GM12878 (cell line): ENCODE measurements at regions of chr1 and their contacts with region 1.

Region 1: GRCh38 chr1:185338719-185339622 is 21.9 kb upstream of the IVNS1ABP start:
- DNase-seq: peak; percentile 86
- ATAC-seq: peak; percentile 97
- H3K4me3 ChIP-seq: no peak overlapping the region
- H3K27ac ChIP-seq: peak overlapping the region; percentile 59
- H3K4me1 ChIP-seq: peaks cover 21% of the 10 kb centered on the region
- H3K27me3 ChIP-seq: no peaks in the 10 kb centered on the region
- CTCF ChIP-seq: no peak
- EP300 ChIP-seq: peak; percentile 93 to 97
- POLR2A ChIP-seq: no peak
- RAD21 ChIP-seq: no peak

Region 2: DNA sequence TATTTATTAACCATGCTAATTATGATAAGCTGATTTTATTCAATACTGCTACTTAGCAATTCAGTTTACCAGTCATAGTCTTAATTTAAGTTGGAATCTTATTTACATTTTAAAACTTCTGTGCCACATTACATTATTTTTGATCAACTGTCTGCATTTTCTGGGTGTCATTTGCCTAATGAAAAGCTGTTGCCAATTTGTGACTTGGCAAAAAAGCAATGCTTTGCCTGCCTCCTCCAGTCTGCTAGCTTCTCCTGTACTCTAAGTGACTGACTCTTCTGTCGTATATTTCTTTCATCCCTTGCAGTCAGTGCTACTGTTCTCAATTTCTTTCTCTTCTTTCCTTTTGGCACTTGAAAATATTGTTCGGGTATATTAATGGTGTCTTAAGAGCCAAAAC is 16.3 kb before region 1 on chr1:
- CTCF ChIA-PET with region 1: interaction called, 29 read pairs
- POLR2A ChIA-PET with region 1: interaction called, 15 read pairs
- RAD21 ChIA-PET with region 1: interaction called, 36 read pairs
- SMC1A ChIA-PET with region 1: interaction called, 54 read pairs
- in situ Hi-C with region 1: no loop called
- intact Hi-C with region 1: loop called (anchors 1 kb)
- DNase-seq: no peak
- ATAC-seq: no peak
- H3K4me3 ChIP-seq: no peak overlapping the region
- H3K27ac ChIP-seq: no peak overlapping the region
- H3K4me1 ChIP-seq: no peaks in the 10 kb centered on the region; the same call in 1 of the 2 replicates
- H3K27me3 ChIP-seq: no peaks in the 10 kb centered on the region
- CTCF ChIP-seq: no peak
- EP300 ChIP-seq: no peak
- POLR2A ChIP-seq: no peak
- RAD21 ChIP-seq: no peak

Region 3: DNA sequence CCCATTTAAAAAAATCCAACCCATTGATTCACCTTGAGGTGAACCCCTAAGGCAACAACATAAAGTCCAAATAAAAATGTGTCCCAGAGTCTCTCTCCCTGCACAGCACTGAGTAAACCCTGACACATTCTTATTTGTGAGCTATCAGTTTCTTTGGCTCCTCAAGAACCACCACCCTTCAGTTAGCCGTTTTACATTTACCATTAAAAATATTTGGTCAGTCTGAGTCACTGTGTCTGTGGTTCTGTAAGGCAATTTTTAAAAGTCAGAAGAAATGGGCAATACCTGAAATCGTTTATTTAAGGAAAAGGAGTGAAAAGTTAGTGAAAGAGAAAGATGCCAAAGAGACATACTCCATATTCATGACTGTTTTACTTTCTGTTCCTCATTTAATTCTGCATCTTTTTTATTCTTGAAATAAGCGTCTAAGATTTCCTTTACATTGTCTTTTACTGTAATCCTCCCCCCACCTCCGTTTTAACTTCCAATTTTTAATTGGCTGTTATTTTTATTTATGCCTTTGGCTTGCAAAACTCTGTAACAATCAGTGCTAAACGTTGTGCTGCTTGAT is 69.8 kb after region 1 on chr1:
- CTCF ChIA-PET with region 1: no interaction called
- POLR2A ChIA-PET with region 1: interaction called, 3 read pairs
- RAD21 ChIA-PET with region 1: interaction called, 4 read pairs
- SMC1A ChIA-PET with region 1: interaction called, 5 read pairs
- in situ Hi-C with region 1: no loop called
- intact Hi-C with region 1: loop called (anchors 2 kb)
- DNase-seq: no peak
- ATAC-seq: peak; percentile 51
- H3K4me3 ChIP-seq: no peak overlapping the region
- H3K27ac ChIP-seq: no peak overlapping the region
- H3K4me1 ChIP-seq: no peaks in the 10 kb centered on the region
- H3K27me3 ChIP-seq: no peaks in the 10 kb centered on the region
- CTCF ChIP-seq: no peak
- EP300 ChIP-seq: no peak
- POLR2A ChIP-seq: no peak
- RAD21 ChIP-seq: no peak

Region 4: GRCh38 chr1:185526344-185527307 is 187.7 kb after region 1 on chr1:
- CTCF ChIA-PET with region 1: no interaction called
- POLR2A ChIA-PET with region 1: no interaction called
- RAD21 ChIA-PET with region 1: no interaction called
- SMC1A ChIA-PET with region 1: no interaction called
- in situ Hi-C with region 1: no loop called
- intact Hi-C with region 1: no loop called
- DNase-seq: peak; percentile 27
- ATAC-seq: peak; percentile 95
- H3K4me3 ChIP-seq: no peak overlapping the region
- H3K27ac ChIP-seq: no peak overlapping the region
- H3K4me1 ChIP-seq: 0 out of 2 replicates have a peak, but pooled peaks cover 8% of the 10 kb centered on the region
- H3K27me3 ChIP-seq: no peaks in the 10 kb centered on the region
- CTCF ChIP-seq: no peak
- EP300 ChIP-seq: no peak
- POLR2A ChIP-seq: no peak
- RAD21 ChIP-seq: no peak

Region 5: DNA sequence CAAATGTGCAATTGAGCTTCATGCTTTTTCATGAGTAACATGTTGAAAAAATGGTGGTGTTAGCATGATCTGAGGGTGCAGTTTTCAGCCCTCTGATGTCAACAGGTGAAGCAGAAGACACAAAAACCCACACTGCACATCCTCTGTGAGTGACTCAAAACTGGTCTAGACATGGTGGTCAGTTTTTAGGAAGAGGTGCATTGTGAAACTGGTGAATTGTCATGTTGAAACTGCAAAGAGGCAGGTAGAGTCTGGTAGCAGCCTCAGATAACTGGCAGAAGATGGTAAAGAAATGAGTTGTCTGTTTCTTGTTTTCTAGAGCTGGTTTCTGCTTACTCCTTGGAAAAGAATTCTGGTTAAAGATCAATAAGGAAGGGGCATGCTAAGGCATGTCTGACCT is 297.9 kb after region 1 on chr1:
- CTCF ChIA-PET with region 1: no interaction called
- POLR2A ChIA-PET with region 1: no interaction called
- RAD21 ChIA-PET with region 1: no interaction called
- SMC1A ChIA-PET with region 1: no interaction called
- in situ Hi-C with region 1: no loop called
- intact Hi-C with region 1: loop called (anchors 2 kb)
- DNase-seq: peak; percentile 91
- ATAC-seq: peak; percentile 99
- H3K4me3 ChIP-seq: no peak overlapping the region
- H3K27ac ChIP-seq: no peak overlapping the region
- H3K4me1 ChIP-seq: peaks cover 2% of the 10 kb centered on the region; the same call in 1 of the 2 replicates
- H3K27me3 ChIP-seq: no peaks in the 10 kb centered on the region
- CTCF ChIP-seq: no peak
- EP300 ChIP-seq: peak; percentile 75 to 96; a peak in 3 of 4 replicates
- POLR2A ChIP-seq: no peak
- RAD21 ChIP-seq: no peak